Calu3 (cell line): ENCODE measurements at regions of chr11 and their contacts with region 1.

Region 1: DNA sequence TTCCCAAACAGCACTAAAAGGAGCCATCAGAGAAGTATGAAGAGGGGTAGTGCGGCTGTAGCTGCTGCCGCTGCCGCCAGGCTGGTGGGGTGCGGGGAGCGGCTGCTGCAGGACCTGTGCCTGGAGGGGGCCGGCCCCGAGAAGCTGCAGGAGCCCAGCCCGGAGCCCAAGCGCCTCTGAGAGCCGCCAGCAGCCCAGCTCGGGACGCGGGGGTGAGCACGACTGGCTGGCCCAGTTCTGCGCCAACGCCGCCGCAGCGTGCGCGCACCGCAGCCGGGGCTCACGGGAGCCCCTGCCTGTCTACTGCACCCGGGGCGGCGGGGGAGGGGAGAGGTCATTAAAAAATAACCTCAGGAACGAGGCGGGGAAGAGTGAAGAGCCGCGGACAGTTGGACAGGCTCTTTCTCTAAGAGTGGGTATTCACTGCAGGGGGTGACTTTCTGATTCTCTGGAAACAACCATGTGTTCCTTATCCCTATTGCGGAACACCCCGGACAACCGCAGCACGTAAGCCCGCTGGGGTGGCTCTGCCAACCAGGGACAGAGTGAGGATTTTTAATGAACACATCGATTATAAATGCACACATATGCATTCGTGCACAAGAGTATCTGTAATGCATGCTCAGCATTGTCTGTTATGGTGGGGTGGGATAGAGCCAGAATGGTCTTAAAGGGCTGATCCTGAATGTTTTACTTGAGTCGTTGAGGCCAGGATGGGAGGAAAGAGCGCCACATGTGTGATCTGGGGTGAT is 453 bp downstream of the GAS2 start:
- DNase-seq: peak; percentile 69
- H3K4me3 Mint-ChIP-seq: peak overlapping the region; percentile 81
- H3K27ac Mint-ChIP-seq: peak overlapping the region; percentile 54
- H3K4me1 Mint-ChIP-seq: peaks cover 23% of the 10 kb centered on the region
- H3K27me3 Mint-ChIP-seq: no peaks in the 10 kb centered on the region
- CTCF ChIP-seq: no peak

Region 2: DNA sequence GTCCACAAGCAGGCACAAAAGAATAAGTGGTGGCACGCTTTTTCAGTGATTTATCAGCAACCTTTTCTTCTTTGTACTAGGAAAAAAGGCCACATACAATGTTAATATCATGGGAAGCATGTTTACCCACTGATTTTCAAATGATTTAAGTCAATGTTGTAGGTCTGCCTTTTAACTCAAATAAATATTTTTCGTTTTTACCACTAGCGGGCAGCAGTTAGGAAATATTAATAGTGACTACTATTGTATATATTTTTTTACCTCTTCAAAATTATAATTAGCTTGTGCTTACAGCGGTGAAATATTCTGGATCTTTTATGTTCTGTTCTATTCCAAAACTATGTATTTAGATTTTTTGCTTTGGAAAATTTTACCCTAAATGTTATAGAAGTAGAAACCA is 335.1 kb before region 1 on chr11:
- CTCF ChIA-PET with region 1: no interaction called
- intact Hi-C with region 1: loop called (anchors 5 kb)
- DNase-seq: no peak
- H3K4me3 Mint-ChIP-seq: no peak overlapping the region
- H3K27ac Mint-ChIP-seq: no peak overlapping the region
- H3K4me1 Mint-ChIP-seq: no peaks in the 10 kb centered on the region
- H3K27me3 Mint-ChIP-seq: peaks cover 8% of the 10 kb centered on the region
- CTCF ChIP-seq: no peak

Region 3: DNA sequence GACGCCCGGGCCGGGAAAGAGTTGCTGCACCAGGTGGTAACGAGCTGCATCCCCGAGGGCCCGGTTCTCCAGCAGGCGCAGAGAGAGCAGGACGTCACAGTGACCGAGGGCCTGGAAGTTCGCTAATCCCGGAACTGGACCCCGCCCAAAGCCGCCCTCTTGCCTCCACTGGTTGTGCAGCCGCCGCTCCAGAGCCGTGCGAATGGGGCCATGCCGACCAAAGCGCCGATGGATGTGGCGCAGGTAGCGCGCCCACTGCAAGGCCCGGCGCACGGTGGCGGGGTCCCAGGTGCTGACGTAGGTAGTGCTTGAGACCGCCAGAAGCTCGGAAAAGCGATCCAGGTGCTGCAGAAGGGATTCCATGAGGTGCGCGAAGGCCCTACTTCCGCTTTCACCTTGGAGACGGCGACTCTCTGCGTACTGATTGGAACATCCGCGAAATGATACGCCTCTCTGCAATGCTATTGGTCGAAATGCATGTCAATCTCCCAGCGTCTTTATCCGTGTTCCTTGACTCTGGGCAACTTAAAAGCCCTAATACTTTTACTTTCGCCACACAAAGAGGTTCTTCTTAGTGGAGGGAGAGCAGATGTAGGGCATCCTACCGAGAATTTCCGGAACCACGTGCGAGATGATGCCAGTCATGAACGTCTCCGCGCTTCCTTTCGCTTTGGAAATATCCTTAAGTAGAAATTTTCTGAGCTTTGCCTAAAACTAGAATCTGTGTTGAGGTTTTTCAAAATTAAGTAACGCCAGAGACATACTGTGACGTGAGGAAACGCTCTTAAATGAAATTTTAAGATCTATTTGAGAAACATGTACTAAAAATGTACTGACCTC is 41.2 kb before region 1 on chr11 and contains the start of gene FANCF:
- CTCF ChIA-PET with region 1: no interaction called
- intact Hi-C with region 1: loop called (anchors 5 kb)
- DNase-seq: peak; percentile 92
- H3K4me3 Mint-ChIP-seq: peak within 1 kb of the TSS; percentile 99
- H3K27ac Mint-ChIP-seq: peak within 1 kb of the TSS; percentile 98
- H3K4me1 Mint-ChIP-seq: no peaks in the 10 kb centered on the region
- H3K27me3 Mint-ChIP-seq: no peaks in the 10 kb centered on the region
- CTCF ChIP-seq: no peak
- total RNA-seq, gene FANCF: 16.4 and 16.7 TPM in 2 replicates

Region 4: DNA sequence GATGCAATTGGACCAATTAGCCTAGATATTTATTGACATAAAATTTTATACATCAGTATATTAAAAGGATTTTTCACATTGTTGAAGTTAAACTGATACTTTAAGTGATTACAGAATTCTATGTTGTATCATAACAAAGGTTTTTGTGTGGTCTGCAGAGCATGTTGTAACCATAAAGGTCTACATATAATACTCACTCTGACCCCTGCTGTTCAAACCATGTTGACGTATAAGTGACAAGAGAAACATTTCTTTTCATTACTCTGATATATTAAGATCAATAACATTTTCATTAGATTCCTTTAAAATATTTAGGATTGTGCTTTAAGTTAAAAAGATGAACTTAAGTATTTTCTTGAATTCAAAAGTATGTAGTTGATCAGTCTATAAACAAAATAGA is 63.5 kb after region 1 on chr11:
- CTCF ChIA-PET with region 1: interaction called, 5 read pairs
- intact Hi-C with region 1: loop called (anchors 1 kb)
- DNase-seq: peak; percentile 14
- H3K4me3 Mint-ChIP-seq: no peak overlapping the region
- H3K27ac Mint-ChIP-seq: no peak overlapping the region
- H3K4me1 Mint-ChIP-seq: no peaks in the 10 kb centered on the region
- H3K27me3 Mint-ChIP-seq: no peaks in the 10 kb centered on the region
- CTCF ChIP-seq: no peak

Region 5: GRCh38 chr11:22778642-22779041 is 111.8 kb after region 1 on chr11:
- CTCF ChIA-PET with region 1: interaction called, 3 read pairs
- intact Hi-C with region 1: loop called (anchors 1 kb)
- DNase-seq: no peak
- H3K4me3 Mint-ChIP-seq: no peak overlapping the region
- H3K27ac Mint-ChIP-seq: no peak overlapping the region
- H3K4me1 Mint-ChIP-seq: peaks cover 9% of the 10 kb centered on the region
- H3K27me3 Mint-ChIP-seq: no peaks in the 10 kb centered on the region
- CTCF ChIP-seq: no peak

Region 6: GRCh38 chr11:22787551-22788162 is 120.8 kb after region 1 on chr11:
- CTCF ChIA-PET with region 1: no interaction called
- intact Hi-C with region 1: loop called (anchors 1 kb)
- DNase-seq: peak; percentile 33
- H3K4me3 Mint-ChIP-seq: no peak overlapping the region
- H3K27ac Mint-ChIP-seq: no peak overlapping the region
- H3K4me1 Mint-ChIP-seq: peaks cover 23% of the 10 kb centered on the region
- H3K27me3 Mint-ChIP-seq: no peaks in the 10 kb centered on the region
- CTCF ChIP-seq: peak; percentile 50

Region 7: GRCh38 chr11:22851477-22851876 is 184.6 kb after region 1 on chr11:
- CTCF ChIA-PET with region 1: no interaction called
- intact Hi-C with region 1: no loop called
- DNase-seq: no peak
- H3K4me3 Mint-ChIP-seq: no peak overlapping the region
- H3K27ac Mint-ChIP-seq: no peak overlapping the region
- H3K4me1 Mint-ChIP-seq: no peaks in the 10 kb centered on the region
- H3K27me3 Mint-ChIP-seq: no peaks in the 10 kb centered on the region
- CTCF ChIP-seq: no peak